RWPE1 (cell line): ENCODE measurements at regions of chr5 and their contacts with region 1.

Region 1: GRCh38 chr5:95142145-95142544 is 142.7 kb downstream of the MCTP1 start:
- DNase-seq: no peak
- H3K27ac ChIP-seq: no peak overlapping the region
- CTCF ChIP-seq: no peak

Region 2: GRCh38 chr5:95130941-95131340 is 11.2 kb before region 1 on chr5:
- CTCF ChIA-PET with region 1: interaction called, 11 read pairs
- POLR2A ChIA-PET with region 1: no interaction called
- DNase-seq: no peak
- H3K27ac ChIP-seq: no peak overlapping the region
- CTCF ChIP-seq: no peak